ENCODE measurements at regions of chr3 and their contacts with region 1.

Region 1: GRCh38 chr3:10322352-10322710 is 1.4 kb upstream of the SEC13 start:
- DNase-seq: peak; percentile 37
- ATAC-seq: peak; percentile 22
- H3K4me3 Mint-ChIP-seq: no peak overlapping the region
- H3K27ac Mint-ChIP-seq: peak overlapping the region; percentile 3
- H3K4me1 Mint-ChIP-seq: peaks cover 23% of the 10 kb centered on the region
- H3K27me3 Mint-ChIP-seq: peaks cover 4% of the 10 kb centered on the region

Region 2: DNA sequence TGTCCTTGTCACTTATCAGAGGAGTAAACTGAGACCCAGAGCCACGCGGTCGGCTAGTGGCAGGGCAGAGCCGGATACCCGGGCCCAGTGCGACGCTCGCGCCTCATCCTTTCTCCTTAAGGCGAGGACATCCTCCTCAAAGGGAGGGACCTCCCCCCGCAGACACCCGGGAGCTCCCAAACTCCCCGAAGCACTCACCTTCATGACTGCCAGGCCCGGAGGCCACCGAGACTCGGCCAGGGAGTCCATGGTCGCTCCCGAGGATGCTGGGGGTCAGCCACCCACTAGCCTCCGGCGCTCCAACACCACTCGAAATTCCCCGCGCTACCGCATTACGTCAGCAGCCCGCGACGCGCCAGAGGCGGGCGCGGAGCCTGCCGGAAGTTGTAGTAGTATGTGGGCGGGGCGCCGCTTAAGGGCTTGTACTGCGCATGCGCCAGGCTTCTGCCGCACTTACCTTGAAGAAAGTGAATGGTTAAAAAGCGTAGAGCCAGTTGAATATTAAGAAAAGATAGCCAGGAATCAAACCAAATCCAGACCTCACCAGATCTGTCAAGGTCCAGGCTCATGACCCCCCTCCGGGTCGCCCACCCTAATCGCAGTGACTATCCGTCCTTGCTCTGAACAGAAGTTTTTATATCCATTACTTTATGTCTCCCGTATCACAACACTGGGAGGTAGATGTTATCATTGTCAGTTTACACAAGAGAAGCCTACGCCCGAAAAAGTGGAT is 1359.0 kb before region 1 on chr3 and contains the start of gene RAD18:
- CTCF ChIA-PET with region 1: no interaction called
- POLR2A ChIA-PET with region 1: no interaction called
- intact Hi-C with region 1: loop called in 1 of 2 experiments (anchors 5 kb)
- DNase-seq: peak; percentile 95
- ATAC-seq: peak; percentile 94
- H3K4me3 Mint-ChIP-seq: peak within 1 kb of the TSS; percentile 95
- H3K27ac Mint-ChIP-seq: peak within 1 kb of the TSS; percentile 93
- H3K4me1 Mint-ChIP-seq: peaks cover 32% of the 10 kb centered on the region
- H3K27me3 Mint-ChIP-seq: no peaks in the 10 kb centered on the region
- total RNA-seq, gene RAD18: 47.8 to 50.5 TPM

Region 3: GRCh38 chr3:9843715-9844438 is 478.5 kb before region 1 on chr3 and contains the start of gene RPUSD3:
- CTCF ChIA-PET with region 1: no interaction called
- POLR2A ChIA-PET with region 1: no interaction called
- intact Hi-C with region 1: loop called in 1 of 2 experiments (anchors 1 kb)
- DNase-seq: peak; percentile 98
- ATAC-seq: peak; percentile 97
- H3K4me3 Mint-ChIP-seq: peak within 1 kb of the TSS; percentile 99
- H3K27ac Mint-ChIP-seq: peak within 1 kb of the TSS; percentile 96
- H3K4me1 Mint-ChIP-seq: peaks cover 28% of the 10 kb centered on the region
- H3K27me3 Mint-ChIP-seq: no peaks in the 10 kb centered on the region
- total RNA-seq, gene RPUSD3: 79.2 to 81.5 TPM

Region 4: GRCh38 chr3:9970020-9970687 is 352.2 kb before region 1 on chr3:
- CTCF ChIA-PET with region 1: no interaction called
- POLR2A ChIA-PET with region 1: no interaction called
- intact Hi-C with region 1: no loop called
- DNase-seq: no peak
- ATAC-seq: no peak
- H3K4me3 Mint-ChIP-seq: no peak overlapping the region
- H3K27ac Mint-ChIP-seq: no peak overlapping the region
- H3K4me1 Mint-ChIP-seq: no peaks in the 10 kb centered on the region
- H3K27me3 Mint-ChIP-seq: no peaks in the 10 kb centered on the region

Region 5: DNA sequence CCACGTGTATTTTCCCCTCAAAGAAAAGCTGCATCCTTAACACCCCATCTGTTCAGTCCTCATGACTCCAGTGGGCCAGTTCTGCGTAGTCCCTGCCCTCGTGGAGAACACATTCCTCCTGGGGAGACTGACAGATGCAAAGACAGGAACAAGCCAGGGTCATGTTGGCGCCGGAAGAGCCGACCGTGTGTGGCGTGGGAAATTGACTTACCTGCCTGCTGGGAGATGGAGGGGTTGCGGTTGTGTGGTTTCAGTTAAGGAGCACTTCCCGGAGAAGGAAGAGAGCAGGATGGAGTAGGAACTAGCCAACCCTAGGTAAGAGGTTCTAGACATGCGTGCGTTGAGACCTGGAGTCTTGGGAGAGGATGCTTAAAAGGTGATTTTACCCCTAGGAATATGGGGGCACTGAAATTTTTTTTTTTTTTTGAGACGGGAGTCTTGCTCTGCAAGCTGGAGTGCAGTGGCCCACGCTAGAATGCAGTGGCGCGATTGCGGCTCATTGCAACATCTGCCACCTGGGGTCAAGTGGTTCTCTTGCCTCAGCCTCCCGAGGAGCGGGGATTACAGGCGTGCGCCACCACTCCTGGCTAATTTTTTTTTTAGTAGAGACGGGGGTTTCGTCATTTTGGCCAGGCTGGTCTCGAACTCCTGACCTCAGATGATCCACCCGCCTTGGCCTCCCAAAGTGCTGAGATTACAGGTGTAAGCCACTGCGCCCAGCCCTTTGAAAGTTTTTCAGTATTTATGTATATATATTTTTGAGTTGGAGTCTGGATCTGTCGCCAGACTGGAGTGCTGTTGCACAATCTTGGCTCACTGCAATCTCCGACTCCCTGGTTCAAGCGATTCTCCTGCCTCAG is 179.4 kb before region 1 on chr3:
- CTCF ChIA-PET with region 1: interaction called, 3 read pairs
- POLR2A ChIA-PET with region 1: no interaction called
- intact Hi-C with region 1: loop called in 1 of 2 experiments (anchors 1 kb)
- DNase-seq: peak; percentile 57
- ATAC-seq: peak; percentile 15
- H3K4me3 Mint-ChIP-seq: peak overlapping the region; percentile 97
- H3K27ac Mint-ChIP-seq: peak overlapping the region; percentile 89
- H3K4me1 Mint-ChIP-seq: peaks cover 28% of the 10 kb centered on the region
- H3K27me3 Mint-ChIP-seq: no peaks in the 10 kb centered on the region

Region 6: DNA sequence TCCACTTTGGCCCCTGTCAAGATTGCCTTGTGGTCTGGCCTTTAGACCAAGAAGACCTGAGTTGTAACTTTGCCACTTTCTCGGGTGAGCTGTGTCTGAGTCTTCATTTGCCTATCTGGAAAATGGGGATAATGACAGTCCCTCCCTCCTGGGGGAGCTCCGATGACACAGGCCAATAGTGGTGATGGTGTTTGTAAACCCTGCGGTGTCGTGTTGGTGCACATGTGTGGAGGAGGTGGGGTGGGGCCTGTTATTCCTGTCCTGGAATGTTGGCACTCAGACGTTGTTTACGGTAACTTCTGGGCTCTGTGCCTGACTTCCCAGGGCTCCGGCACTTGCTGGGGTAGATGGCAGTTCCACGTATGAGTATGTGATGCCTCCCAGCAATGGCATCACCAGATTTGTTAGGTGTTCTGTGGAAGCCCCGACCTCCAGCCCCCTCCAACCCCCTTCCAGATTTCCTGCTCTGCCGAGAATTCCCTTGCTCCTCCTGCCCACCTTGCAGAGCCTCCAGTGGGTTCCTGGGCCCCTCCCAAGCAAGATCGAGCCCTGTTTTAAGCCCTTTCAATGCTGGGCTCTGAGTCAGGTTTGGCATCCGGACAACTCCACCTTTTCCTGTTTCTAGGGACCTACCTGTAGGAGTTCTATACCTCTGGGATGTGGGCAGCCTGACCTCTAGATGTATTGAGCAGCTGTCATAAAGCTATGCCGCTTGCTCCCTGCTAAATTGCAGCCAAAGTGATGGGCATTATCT is 863.4 kb after region 1 on chr3:
- CTCF ChIA-PET with region 1: no interaction called
- POLR2A ChIA-PET with region 1: no interaction called
- intact Hi-C with region 1: no loop called
- DNase-seq: no peak
- ATAC-seq: no peak
- H3K4me3 Mint-ChIP-seq: no peak overlapping the region
- H3K27ac Mint-ChIP-seq: no peak overlapping the region
- H3K4me1 Mint-ChIP-seq: no peaks in the 10 kb centered on the region
- H3K27me3 Mint-ChIP-seq: peaks cover 9% of the 10 kb centered on the region

Measured in activated CD4-positive, alpha-beta T cell treated with anti-CD3 and anti-CD28 coated beads for 36 hours (primary cell).